ENCODE measurements at regions of chr2 and their contacts with region 1.

Region 1: DNA sequence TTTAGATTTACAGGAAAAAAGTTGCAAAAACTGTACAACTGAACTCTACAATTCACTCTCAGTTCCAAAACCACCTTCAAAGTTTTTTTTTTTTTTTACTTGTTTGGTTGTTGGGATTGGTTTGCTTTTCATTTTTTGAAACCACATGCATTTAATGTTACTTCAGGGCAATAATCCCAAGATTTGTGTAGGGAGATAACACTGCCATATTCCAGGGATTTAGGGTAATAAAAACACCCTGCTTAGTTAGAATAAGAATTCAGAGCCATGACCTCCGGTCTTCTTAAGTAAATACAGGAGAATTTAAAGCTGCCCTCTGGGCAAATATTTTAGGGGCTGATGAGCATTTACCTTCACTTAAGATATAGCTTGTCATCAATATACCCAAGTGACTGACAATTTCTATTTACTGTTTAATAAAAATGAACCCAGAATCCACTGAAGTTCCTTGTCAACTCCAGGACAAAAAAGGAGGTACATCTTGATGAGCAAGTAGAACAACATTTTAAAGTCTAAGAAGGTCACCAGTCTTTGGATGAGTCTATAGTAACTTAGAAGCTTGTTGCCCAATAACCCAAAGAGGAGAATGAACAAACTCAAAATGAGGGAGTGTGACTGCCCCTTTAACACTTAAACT is 24.2 kb upstream of the IKZF2 start:
- DNase-seq: peak; percentile 47 to 65
- H3K4me3 ChIP-seq: no peak overlapping the region
- H3K4me3 Mint-ChIP-seq: no peak overlapping the region
- H3K27ac Mint-ChIP-seq: no peak overlapping the region
- H3K4me1 ChIP-seq: peaks cover 37% of the 10 kb centered on the region
- H3K4me1 Mint-ChIP-seq: peaks cover 41% of the 10 kb centered on the region
- H3K27me3 ChIP-seq: no peaks in the 10 kb centered on the region
- H3K27me3 Mint-ChIP-seq: no peaks in the 10 kb centered on the region
- CTCF ChIP-seq: no peak

Region 2: DNA sequence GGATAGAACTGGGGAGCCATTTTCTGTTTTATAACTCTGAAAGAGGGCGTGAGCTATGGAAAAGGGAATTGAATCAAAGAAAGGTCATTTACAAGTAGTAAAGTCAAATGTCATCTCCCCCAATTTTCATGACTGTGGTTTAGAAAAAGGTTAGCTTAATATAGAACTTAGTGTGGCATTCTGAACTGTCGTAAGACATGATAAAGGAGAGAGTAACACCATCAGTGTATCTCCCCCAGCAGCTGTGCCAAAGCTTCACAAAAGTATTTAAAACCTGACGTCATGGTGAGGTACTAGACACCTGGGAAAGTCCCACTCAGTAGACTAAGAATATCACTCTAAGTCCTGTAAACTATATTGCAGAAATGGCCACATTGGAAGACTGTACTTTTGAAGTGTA is 18.4 kb before region 1 on chr2:
- CTCF ChIA-PET with region 1: no interaction called
- POLR2A ChIA-PET with region 1: no interaction called
- intact Hi-C with region 1: loop called (anchors 1 kb)
- DNase-seq: no peak
- H3K4me3 ChIP-seq: no peak overlapping the region
- H3K4me3 Mint-ChIP-seq: no peak overlapping the region
- H3K27ac Mint-ChIP-seq: no peak overlapping the region
- H3K4me1 ChIP-seq: peaks cover 24% of the 10 kb centered on the region
- H3K4me1 Mint-ChIP-seq: peaks cover 4% of the 10 kb centered on the region
- H3K27me3 ChIP-seq: no peaks in the 10 kb centered on the region
- H3K27me3 Mint-ChIP-seq: no peaks in the 10 kb centered on the region
- CTCF ChIP-seq: no peak

Region 3: DNA sequence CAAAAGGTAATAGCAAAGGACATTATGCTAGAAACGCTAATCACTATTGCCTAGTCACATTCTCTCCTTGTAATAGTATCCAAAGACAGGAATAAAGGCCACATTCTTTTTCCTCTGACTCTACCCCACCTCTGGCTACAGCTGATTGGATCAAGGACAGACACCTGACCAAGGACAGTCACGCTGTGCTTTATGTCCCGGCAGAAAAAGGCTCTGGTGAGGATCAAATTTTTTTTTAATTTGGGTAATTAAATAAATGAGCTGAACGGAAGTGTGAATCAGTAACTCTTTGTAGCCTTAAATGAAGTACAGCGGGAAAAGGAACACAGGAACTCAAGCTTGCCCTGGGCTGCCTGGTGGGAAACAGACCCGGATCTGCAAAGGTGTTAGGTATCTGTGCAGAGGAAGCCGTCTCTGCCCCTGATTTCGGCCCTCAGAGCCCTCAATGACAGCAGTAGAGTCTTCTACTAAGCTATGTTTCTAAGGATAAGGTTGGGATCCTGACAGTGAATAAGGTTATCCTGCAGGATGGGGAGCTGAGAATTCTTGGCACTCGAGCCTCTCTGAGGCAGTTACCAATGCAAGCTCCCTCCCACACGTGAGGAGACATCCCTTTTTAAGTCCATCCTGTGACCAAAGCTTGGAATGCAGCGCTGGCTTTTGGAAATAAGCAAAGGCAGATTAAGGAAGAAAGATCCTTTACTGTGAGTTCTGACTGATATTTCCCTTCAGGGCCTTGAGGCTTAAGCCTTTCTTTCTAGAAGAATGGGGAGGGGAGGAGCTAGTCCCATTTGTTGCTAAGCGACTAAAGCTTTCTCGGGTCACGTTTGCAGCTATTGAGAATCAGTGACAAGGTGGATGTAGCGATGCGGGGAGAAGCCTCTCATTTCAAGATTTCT is 13.6 kb after region 1 on chr2:
- CTCF ChIA-PET with region 1: no interaction called
- POLR2A ChIA-PET with region 1: no interaction called
- intact Hi-C with region 1: loop called (anchors 1 kb)
- DNase-seq: peak; percentile 50 to 65
- H3K4me3 ChIP-seq: peak overlapping the region; percentile 15
- H3K4me3 Mint-ChIP-seq: peak overlapping the region; percentile 71
- H3K27ac Mint-ChIP-seq: peak overlapping the region; percentile 85
- H3K4me1 ChIP-seq: peaks cover 32% of the 10 kb centered on the region
- H3K4me1 Mint-ChIP-seq: peaks cover 28% of the 10 kb centered on the region
- H3K27me3 ChIP-seq: no peaks in the 10 kb centered on the region
- H3K27me3 Mint-ChIP-seq: no peaks in the 10 kb centered on the region
- CTCF ChIP-seq: no peak

Region 4: GRCh38 chr2:213220967-213221613 is 45.4 kb after region 1 on chr2:
- CTCF ChIA-PET with region 1: no interaction called
- POLR2A ChIA-PET with region 1: no interaction called
- intact Hi-C with region 1: no loop called
- DNase-seq: no peak
- H3K4me3 ChIP-seq: no peak overlapping the region
- H3K4me3 Mint-ChIP-seq: no peak overlapping the region
- H3K27ac Mint-ChIP-seq: no peak overlapping the region
- H3K4me1 ChIP-seq: no peaks in the 10 kb centered on the region
- H3K4me1 Mint-ChIP-seq: no peaks in the 10 kb centered on the region
- H3K27me3 ChIP-seq: no peaks in the 10 kb centered on the region
- H3K27me3 Mint-ChIP-seq: no peaks in the 10 kb centered on the region
- CTCF ChIP-seq: no peak

Measured in Caco-2 (cell line).